Ovary (tissue), 10 donors: ENCODE measurements at regions of chrX and their contacts with region 1.

Region 1: DNA sequence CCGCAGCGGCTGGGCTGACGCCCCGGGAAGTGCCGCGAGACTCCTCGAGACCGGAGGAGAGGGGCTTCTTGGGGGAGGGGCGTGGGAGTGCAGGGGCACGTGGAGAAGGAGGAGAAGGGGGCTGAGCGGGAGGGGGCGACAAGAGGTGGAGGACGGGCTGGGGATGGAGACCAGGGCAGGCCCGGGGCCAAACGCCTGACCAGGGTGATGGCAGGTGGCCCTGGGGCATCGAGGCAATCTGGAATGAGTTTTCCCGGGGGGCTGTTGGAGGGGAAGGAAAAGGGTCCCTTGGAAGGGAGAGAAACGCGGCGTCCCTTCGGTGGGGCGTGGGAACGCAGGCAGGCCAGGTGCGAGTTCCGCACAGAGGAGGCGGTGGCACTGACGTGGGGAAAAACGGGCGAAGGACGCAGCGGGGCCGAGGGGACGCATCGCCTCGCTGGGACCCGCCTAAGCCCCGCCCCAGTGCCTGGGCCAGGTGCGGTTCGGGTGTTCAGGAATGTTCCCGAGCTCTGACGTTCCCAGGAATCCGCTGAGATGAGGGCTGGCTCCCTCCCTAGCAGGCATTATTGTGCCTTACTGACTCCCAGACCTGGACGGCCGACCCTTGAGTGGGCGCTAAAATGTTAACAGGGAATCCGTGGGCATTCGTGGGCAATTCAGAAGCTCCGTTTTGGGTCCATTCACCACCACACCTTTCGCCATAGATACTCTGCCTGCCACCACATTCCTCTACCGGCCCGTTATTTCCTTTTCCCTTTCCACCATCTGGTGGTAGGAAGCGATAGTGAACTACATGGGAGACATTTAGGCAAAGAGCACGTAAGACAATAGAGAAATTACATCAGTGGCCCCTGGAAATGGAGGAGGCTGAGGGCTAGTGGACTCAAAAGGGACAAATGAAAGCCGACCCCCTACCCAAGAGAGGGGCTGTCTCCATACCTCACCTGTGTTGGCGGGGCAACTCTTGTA is 795 bp upstream of the SH3KBP1 start:
- DNase-seq: peak; percentile 37 to 72 (median 55)
- H3K4me3 ChIP-seq: peak overlapping the region; percentile 44
- H3K27ac ChIP-seq: peak overlapping the region; percentile 67 to 75
- H3K4me1 ChIP-seq: no peaks in the 10 kb centered on the region
- H3K27me3 ChIP-seq: no peaks in the 10 kb centered on the region
- CTCF ChIP-seq: peak in 2 of 3 donors; percentile 57 to 68
- EP300 ChIP-seq: no peak
- POLR2A ChIP-seq: no peak

Region 2: GRCh38 chrX:19593690-19594089 is 294.5 kb before region 1 on chrX:
- intact Hi-C with region 1: loop called in 3 of 4 experiments (anchors 5 to 10 kb)
- DNase-seq: peak in 1 of 5 donors; percentile 28
- H3K4me3 ChIP-seq: no peak overlapping the region
- H3K27ac ChIP-seq: no peak overlapping the region
- H3K4me1 ChIP-seq: no peaks in the 10 kb centered on the region
- H3K27me3 ChIP-seq: no peaks in the 10 kb centered on the region
- CTCF ChIP-seq: peak; percentile 13 to 66 (median 54)
- EP300 ChIP-seq: no peak
- POLR2A ChIP-seq: no peak